GM12878 (cell line): ENCODE measurements at regions of chr5 and their contacts with region 1.

Region 1: GRCh38 chr5:136062366-136063274 is 33.8 kb downstream of the TGFBI start:
- DNase-seq: no peak
- ATAC-seq: peak; percentile 91
- H3K4me3 ChIP-seq: no peak overlapping the region
- H3K27ac ChIP-seq: no peak overlapping the region
- H3K4me1 ChIP-seq: no peaks in the 10 kb centered on the region
- H3K27me3 ChIP-seq: no peaks in the 10 kb centered on the region; a peak in 2 of 4 replicates
- CTCF ChIP-seq: peak; percentile 57 to 65 (median 60)
- EP300 ChIP-seq: no peak
- POLR2A ChIP-seq: no peak
- RAD21 ChIP-seq: peak; percentile 79

Region 2: DNA sequence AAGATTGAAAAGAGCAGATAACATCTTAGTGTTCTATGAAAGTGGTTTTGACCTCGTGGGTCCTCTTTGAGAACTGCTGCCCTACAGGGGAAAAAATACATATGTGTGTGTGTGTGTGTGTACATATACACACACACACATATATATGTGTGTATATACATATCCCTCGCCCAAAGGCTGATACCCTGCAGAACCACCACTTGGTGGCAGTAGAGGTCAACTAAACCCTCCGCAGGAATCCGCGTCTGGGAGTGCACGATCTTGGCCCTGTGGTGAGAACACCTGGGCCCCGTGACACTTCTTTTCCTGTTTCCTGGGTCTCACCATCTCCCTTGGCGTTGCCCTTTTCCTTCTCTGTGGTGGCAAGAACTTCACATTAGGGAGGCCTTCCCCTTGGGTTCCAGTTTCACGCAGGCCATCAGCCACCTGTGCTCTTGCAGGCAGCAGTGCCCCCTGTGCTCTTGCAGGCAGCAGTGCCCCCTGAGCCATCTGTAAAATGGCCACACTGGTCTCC is 175.2 kb before region 1 on chr5:
- CTCF ChIA-PET with region 1: interaction called, 17 read pairs
- POLR2A ChIA-PET with region 1: no interaction called
- RAD21 ChIA-PET with region 1: interaction called, 3 read pairs
- SMC1A ChIA-PET with region 1: interaction called, 8 read pairs
- in situ Hi-C with region 1: no loop called
- intact Hi-C with region 1: loop called (anchors 1 kb)
- DNase-seq: peak; percentile 25
- ATAC-seq: peak; percentile 98
- H3K4me3 ChIP-seq: no peak overlapping the region
- H3K27ac ChIP-seq: no peak overlapping the region
- H3K4me1 ChIP-seq: no peaks in the 10 kb centered on the region
- H3K27me3 ChIP-seq: no peaks in the 10 kb centered on the region
- CTCF ChIP-seq: peak; percentile 72 to 78 (median 74)
- EP300 ChIP-seq: no peak
- POLR2A ChIP-seq: no peak
- RAD21 ChIP-seq: peak; percentile 85

Region 3: DNA sequence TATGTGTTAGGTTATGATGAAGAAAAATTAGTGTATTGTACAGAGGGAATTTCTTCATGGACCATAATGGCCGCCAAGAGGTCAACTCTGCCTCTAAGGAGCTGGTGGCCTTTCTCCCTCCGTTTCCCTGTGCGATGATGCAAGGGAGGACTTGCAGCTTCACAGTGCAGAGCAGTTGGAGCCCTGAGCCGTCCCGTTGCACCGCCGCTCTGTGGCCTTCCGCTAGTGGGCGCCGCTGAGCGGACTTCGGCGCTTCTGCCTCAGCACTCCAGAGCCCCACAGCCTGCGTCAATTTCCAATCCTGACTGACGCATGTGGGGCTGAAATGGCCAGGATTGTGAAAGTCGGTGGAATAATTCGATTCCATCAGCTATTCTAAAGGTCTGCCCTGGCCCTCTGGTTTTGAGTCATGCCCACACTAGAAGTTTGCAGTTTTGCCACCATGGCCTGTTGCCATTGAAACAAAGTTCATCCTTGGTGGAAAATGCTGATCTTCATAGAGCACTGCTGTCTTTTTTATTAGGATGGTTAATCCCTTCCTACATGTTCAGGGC is 85.2 kb before region 1 on chr5:
- CTCF ChIA-PET with region 1: interaction called, 31 read pairs
- POLR2A ChIA-PET with region 1: no interaction called
- RAD21 ChIA-PET with region 1: interaction called, 4 read pairs
- SMC1A ChIA-PET with region 1: interaction called, 19 read pairs
- in situ Hi-C with region 1: no loop called
- intact Hi-C with region 1: loop called (anchors 1 kb)
- DNase-seq: no peak
- ATAC-seq: peak; percentile 99
- H3K4me3 ChIP-seq: no peak overlapping the region
- H3K27ac ChIP-seq: no peak overlapping the region
- H3K4me1 ChIP-seq: no peaks in the 10 kb centered on the region
- H3K27me3 ChIP-seq: peaks cover 0 to 3% of the 10 kb centered on the region in 2 experiments; a peak in 2 of 4 replicates
- CTCF ChIP-seq: peak; percentile 71 to 94 (median 88)
- EP300 ChIP-seq: no peak
- POLR2A ChIP-seq: no peak
- RAD21 ChIP-seq: peak; percentile 58

Region 4: DNA sequence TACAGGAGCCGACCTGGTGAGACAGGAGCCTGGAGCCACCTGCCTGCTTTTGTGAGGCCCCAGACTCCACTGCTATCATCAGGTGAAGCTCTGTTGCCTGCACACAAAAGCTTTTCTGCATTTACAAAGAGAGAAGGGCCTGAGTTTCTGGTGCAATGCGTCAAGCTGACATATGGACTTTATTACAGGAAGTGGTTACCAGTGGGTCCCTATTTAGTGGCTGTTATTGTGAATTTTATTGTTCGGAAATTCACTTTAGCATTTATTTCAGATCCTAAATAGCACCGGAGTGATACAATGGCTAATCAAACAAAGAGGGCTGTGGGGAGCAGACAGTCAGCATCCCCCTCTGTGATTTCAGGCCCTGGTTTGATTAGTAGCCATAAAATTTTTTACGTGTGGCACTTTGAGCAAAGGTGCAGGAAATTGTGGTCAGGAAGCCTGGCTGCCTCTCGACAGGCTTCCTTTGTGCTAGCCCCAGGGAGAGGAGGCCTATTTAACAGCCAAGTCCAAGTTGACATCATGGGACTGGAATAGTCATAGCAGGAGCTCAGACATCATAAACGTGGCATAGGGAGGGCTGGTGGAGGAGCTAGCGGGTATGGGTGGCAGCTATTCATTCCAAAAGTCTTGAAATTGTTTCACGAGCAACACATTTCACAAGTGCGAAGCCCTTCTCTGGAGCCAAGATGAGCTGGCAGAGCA is 25.5 kb before region 1 on chr5:
- CTCF ChIA-PET with region 1: interaction called, 10 read pairs
- POLR2A ChIA-PET with region 1: no interaction called
- RAD21 ChIA-PET with region 1: interaction called, 3 read pairs
- SMC1A ChIA-PET with region 1: interaction called, 14 read pairs
- in situ Hi-C with region 1: no loop called
- intact Hi-C with region 1: no loop called
- DNase-seq: peak; percentile 40
- ATAC-seq: peak; percentile 85
- H3K4me3 ChIP-seq: no peak overlapping the region
- H3K27ac ChIP-seq: no peak overlapping the region
- H3K4me1 ChIP-seq: peaks cover 15% of the 10 kb centered on the region
- H3K27me3 ChIP-seq: peaks cover 0 to 2% of the 10 kb centered on the region in 2 experiments; a peak in 1 of 4 replicates
- CTCF ChIP-seq: no peak
- EP300 ChIP-seq: 0 out of 4 replicates have a peak, but pooled peaks of 1 of the 2 experiments have one; percentile 8
- POLR2A ChIP-seq: no peak
- RAD21 ChIP-seq: no peak

Region 5: GRCh38 chr5:136080483-136081216 is 18.0 kb after region 1 on chr5:
- CTCF ChIA-PET with region 1: interaction called, 74 read pairs
- POLR2A ChIA-PET with region 1: interaction called, 3 read pairs
- RAD21 ChIA-PET with region 1: interaction called, 8 read pairs
- SMC1A ChIA-PET with region 1: interaction called, 56 read pairs
- in situ Hi-C with region 1: no loop called
- intact Hi-C with region 1: no loop called
- DNase-seq: peak; percentile 82
- ATAC-seq: peak; percentile 89
- H3K4me3 ChIP-seq: peak overlapping the region; percentile 62; the same call in 1 of the 2 replicates
- H3K27ac ChIP-seq: no peak overlapping the region
- H3K4me1 ChIP-seq: no peaks in the 10 kb centered on the region; the same call in 1 of the 2 replicates
- H3K27me3 ChIP-seq: peaks cover 0 to 2% of the 10 kb centered on the region in 2 experiments; a peak in 2 of 4 replicates
- CTCF ChIP-seq: no peak
- EP300 ChIP-seq: peak in 1 of 2 experiments; percentile 70; a peak in 3 of 4 replicates
- POLR2A ChIP-seq: peak; percentile 60; the same call in 1 of the 2 replicates
- RAD21 ChIP-seq: no peak

Region 6: DNA sequence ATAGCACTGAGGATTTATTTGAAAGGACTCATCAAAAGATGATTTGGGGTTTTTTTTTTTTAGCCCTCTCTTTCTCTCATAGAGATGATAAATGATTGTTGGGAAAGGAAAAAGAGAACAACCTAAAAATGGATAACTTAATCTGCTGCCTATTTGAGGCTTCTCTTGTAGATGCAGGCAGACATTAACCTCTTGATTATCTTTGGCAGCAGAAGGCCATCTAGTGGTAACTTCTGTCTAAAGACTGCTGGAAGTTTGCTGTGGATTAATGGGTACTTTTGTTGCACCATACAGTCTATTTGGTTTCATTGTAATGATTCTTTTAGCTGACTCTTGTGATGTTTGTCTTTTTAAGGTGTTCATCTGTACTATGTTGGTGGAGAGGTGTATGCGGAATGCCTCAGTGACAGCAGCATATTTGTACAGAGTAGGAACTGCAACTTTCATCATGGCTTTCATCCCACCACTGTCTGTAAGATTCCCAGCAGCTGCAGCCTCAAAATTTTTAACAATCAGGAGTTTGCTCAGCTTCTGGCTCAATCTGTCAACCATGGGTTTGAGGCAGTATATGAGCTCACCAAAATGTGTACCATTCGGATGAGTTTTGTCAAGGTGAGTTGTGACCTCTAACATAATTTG is 111.5 kb after region 1 on chr5:
- CTCF ChIA-PET with region 1: interaction called, 76 read pairs
- POLR2A ChIA-PET with region 1: no interaction called
- RAD21 ChIA-PET with region 1: interaction called, 7 read pairs
- SMC1A ChIA-PET with region 1: interaction called, 56 read pairs
- in situ Hi-C with region 1: no loop called
- intact Hi-C with region 1: loop called (anchors 1 kb)
- DNase-seq: peak; percentile 12
- ATAC-seq: peak; percentile 88
- H3K4me3 ChIP-seq: no peak overlapping the region
- H3K27ac ChIP-seq: no peak overlapping the region
- H3K4me1 ChIP-seq: no peaks in the 10 kb centered on the region
- H3K27me3 ChIP-seq: no peaks in the 10 kb centered on the region
- CTCF ChIP-seq: peak; percentile 67 to 74 (median 70)
- EP300 ChIP-seq: no peak
- POLR2A ChIP-seq: no peak
- RAD21 ChIP-seq: peak; percentile 81

Region 7: GRCh38 chr5:136212252-136212721 is 149.7 kb after region 1 on chr5:
- CTCF ChIA-PET with region 1: interaction called, 17 read pairs
- POLR2A ChIA-PET with region 1: no interaction called
- RAD21 ChIA-PET with region 1: interaction called, 6 read pairs
- SMC1A ChIA-PET with region 1: interaction called, 14 read pairs
- in situ Hi-C with region 1: no loop called
- intact Hi-C with region 1: no loop called
- DNase-seq: no peak
- ATAC-seq: peak; percentile 85
- H3K4me3 ChIP-seq: no peak overlapping the region
- H3K27ac ChIP-seq: no peak overlapping the region
- H3K4me1 ChIP-seq: no peaks in the 10 kb centered on the region
- H3K27me3 ChIP-seq: peaks cover 0 to 3% of the 10 kb centered on the region in 2 experiments; a peak in 2 of 4 replicates
- CTCF ChIP-seq: peak; percentile 81 to 87 (median 81)
- EP300 ChIP-seq: no peak
- POLR2A ChIP-seq: no peak
- RAD21 ChIP-seq: peak; percentile 79

Region 8: DNA sequence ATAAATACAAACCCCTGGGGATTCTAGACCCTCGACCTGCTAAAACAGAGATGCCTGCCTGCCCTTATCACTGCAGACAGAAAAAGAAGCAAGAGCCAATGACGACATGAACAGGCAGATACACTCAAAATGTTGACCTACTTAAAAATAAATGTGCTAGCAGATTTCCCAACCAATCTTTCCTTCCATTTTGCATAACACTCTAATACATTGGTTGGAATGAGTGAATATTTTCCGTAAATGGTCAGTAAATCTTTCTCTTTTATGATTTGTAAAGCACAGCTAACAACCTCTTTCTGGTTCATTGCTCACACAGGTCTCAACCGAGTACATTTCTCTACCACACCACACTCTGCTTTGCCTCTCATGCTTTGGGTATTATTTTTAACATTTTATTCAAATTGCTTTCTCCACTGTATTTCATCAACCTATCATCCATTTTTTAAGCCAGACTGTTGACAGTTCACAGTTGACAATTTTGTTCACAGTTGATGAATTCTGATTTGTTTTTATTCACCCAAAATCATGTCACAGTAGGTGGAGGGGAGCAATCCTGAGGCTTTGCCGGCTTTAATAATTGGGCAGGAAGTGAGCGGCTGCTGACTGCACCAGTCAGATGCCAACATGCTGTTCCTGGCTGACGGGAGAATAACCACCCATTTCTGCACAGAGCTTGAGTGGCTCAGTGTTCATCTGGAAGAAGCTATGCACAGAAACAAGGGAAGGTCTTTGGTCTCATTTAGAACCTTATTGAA is 1009.9 kb after region 1 on chr5:
- CTCF ChIA-PET with region 1: no interaction called
- POLR2A ChIA-PET with region 1: no interaction called
- RAD21 ChIA-PET with region 1: no interaction called
- SMC1A ChIA-PET with region 1: no interaction called
- in situ Hi-C with region 1: no loop called
- intact Hi-C with region 1: no loop called
- DNase-seq: no peak
- ATAC-seq: peak; percentile 40; the same call in 2 of the 3 replicates
- H3K4me3 ChIP-seq: no peak overlapping the region
- H3K27ac ChIP-seq: no peak overlapping the region
- H3K4me1 ChIP-seq: no peaks in the 10 kb centered on the region
- H3K27me3 ChIP-seq: no peaks in the 10 kb centered on the region; a peak in 1 of 4 replicates
- CTCF ChIP-seq: no peak
- EP300 ChIP-seq: no peak
- POLR2A ChIP-seq: no peak
- RAD21 ChIP-seq: no peak